PC-9 (cell line): ENCODE measurements at regions of chr7 and their contacts with region 1.

Region 1: GRCh38 chr7:110442381-110442837 is 648.5 kb upstream of the LRRN3 start:
- DNase-seq: peak; percentile 44 to 47
- H3K4me3 ChIP-seq: no peak overlapping the region
- H3K27ac ChIP-seq: no peak overlapping the region
- H3K4me1 ChIP-seq: no peaks in the 10 kb centered on the region
- H3K27me3 ChIP-seq: no peaks in the 10 kb centered on the region
- CTCF ChIP-seq: peak; percentile 71

Region 2: DNA sequence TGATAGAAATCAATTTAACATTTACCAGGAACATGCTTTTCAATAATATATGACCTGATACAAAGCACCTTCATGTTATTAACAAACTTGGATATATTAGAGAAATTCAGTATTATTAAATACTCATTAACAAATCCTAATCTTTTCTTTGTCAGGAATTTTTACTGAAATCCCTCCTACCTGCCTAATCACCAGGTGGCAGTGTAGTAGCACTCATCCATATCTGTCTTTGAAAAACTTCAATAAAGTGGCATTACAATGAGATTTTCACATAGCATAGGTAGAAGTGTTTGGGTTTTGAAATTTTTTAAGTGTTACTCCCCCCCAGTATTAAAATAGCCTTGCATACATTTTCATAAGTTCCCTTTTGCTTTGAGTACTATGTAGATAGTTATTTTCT is 598.0 kb before region 1 on chr7:
- CTCF ChIA-PET with region 1: no interaction called
- POLR2A ChIA-PET with region 1: no interaction called
- intact Hi-C with region 1: loop called (anchors 2 kb)
- DNase-seq: peak in 1 of 2 experiments; percentile 5
- H3K4me3 ChIP-seq: no peak overlapping the region
- H3K27ac ChIP-seq: no peak overlapping the region
- H3K4me1 ChIP-seq: no peaks in the 10 kb centered on the region
- H3K27me3 ChIP-seq: no peaks in the 10 kb centered on the region
- CTCF ChIP-seq: peak; percentile 72

Region 3: DNA sequence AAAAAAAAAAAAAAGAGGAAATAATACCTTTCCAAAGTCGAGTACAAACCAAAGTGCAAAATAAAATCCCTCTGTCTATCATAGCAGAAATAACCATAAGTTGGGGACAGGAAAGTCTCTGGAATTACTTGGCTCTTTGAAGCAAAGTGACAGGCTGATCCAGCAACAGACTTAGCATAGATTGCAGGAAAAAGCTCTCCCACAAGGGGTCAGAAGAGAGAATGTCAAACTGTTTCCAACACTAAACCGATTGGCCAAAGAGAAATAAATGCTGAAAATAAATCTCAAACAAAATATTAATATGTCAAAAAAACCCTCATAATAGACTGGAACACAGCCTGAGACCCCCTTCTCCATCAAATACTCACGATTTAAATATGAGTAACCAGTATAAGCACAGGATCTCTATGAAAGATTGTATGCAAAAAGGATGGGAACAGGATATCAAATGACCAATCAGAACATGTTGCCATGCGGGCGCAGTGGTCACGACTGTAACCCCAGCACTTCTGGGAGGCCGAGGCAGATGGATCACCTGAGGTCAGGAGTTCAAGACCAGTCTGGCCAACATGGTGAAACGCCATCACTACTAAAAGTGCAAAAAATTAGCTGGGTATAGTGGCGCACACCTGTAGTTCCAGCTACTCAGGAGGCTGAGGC is 352.2 kb before region 1 on chr7:
- CTCF ChIA-PET with region 1: interaction called, 8 read pairs
- POLR2A ChIA-PET with region 1: no interaction called
- intact Hi-C with region 1: loop called (anchors 1 kb)
- DNase-seq: no peak
- H3K4me3 ChIP-seq: no peak overlapping the region
- H3K27ac ChIP-seq: no peak overlapping the region
- H3K4me1 ChIP-seq: no peaks in the 10 kb centered on the region
- H3K27me3 ChIP-seq: no peaks in the 10 kb centered on the region
- CTCF ChIP-seq: peak; percentile 31; the same call in 1 of the 2 replicates

Region 4: GRCh38 chr7:110224643-110225042 is 217.8 kb before region 1 on chr7:
- CTCF ChIA-PET with region 1: no interaction called
- POLR2A ChIA-PET with region 1: no interaction called
- intact Hi-C with region 1: no loop called
- DNase-seq: peak; percentile 44 to 59
- H3K4me3 ChIP-seq: no peak overlapping the region
- H3K27ac ChIP-seq: no peak overlapping the region
- H3K4me1 ChIP-seq: 0 out of 2 replicates have a peak, but pooled peaks cover 7% of the 10 kb centered on the region
- H3K27me3 ChIP-seq: no peaks in the 10 kb centered on the region
- CTCF ChIP-seq: no peak

Region 5: DNA sequence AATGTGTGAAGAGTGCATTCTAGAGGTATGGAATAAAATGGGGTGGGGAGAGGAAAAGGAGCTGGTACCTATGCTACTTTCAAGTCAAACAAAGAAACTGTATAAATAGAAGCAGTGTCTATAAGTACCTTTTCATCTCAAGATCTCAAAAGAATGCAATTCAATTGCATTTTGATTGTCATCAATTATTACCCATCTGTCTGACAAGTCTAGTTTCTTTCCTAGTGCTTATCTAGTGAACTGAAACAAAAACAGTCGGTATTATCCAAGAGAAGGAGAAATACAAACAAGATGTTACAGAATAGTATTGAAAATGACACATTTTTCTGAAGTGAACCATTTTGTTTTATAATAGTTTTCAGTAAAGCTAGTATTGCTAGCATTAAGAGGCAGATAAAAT is 106.0 kb before region 1 on chr7:
- CTCF ChIA-PET with region 1: no interaction called
- POLR2A ChIA-PET with region 1: no interaction called
- intact Hi-C with region 1: no loop called
- DNase-seq: no peak
- H3K4me3 ChIP-seq: no peak overlapping the region
- H3K27ac ChIP-seq: no peak overlapping the region
- H3K4me1 ChIP-seq: no peaks in the 10 kb centered on the region
- H3K27me3 ChIP-seq: no peaks in the 10 kb centered on the region
- CTCF ChIP-seq: no peak